Mucosa of descending colon (tissue), 3 donors: ENCODE measurements at regions of chr7 and their contacts with region 1.

Region 1: DNA sequence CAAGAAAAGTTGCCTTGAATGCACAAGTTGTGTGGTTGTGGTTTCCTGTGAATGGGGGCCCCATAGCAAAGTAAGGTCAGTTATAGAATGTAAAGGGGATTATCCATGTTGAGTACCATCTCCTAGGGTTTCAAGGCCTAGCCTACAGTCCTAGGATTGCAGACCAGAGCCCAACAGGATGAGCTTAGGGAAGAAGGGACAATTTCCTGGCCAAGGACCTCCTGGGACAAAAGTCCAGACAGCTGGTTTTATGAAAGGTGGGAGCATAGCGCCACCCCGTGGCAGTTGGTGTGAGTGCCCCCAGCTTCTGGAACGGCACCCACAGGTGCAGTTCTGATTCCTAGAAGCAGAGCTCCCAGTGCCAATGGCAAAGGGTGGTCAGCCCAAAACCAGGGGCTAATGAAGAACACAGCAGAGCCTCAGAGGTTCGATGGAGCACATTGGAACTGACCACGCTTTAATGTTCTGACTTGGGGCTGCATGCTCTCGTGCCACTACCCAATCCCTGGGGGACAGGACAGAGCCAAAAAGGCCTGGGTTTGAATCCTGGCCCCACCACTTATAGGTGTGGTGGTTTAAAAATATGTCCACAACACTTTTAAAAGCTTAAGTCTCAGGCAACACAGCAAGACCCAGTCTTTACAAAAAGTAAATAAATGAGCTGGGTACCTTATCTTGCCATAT is 25.8 kb upstream of the TMEM120A start:
- DNase-seq: peak; percentile 72 to 91 (median 86)
- ATAC-seq: peak; percentile 96
- H3K4me3 ChIP-seq: no peak overlapping the region
- H3K4me1 ChIP-seq: peaks cover 3% of the 10 kb centered on the region
- CTCF ChIP-seq: peak; percentile 82

Region 2: GRCh38 chr7:75866489-75867389 is 153.4 kb before region 1 on chr7:
- intact Hi-C with region 1: loop called (anchors 1 to 10 kb)
- DNase-seq: peak in 2 of 3 donors; percentile 52 to 72
- ATAC-seq: peak; percentile 93
- H3K4me3 ChIP-seq: no peak overlapping the region
- H3K4me1 ChIP-seq: no peaks in the 10 kb centered on the region
- CTCF ChIP-seq: peak; percentile 89

Region 3: DNA sequence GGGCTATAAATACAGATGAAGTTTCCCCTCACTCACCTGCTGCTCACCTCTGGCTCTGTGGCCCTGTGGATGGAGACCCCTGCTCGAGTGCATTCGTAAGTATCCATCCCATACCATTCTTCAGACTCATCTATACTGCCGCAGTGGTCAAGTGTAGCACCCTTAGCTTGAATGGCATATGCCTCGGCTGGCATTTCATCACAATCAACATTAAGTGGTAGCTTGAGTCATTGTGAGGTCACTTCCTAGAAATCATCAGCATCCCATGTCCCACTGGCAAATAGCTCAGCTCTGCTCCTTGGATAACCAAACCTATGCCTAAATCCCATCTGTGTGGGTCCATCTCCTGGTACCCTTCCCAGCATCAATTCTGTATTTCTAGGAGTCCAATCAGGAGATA is 65.9 kb after region 1 on chr7:
- intact Hi-C with region 1: no loop called
- DNase-seq: no peak
- ATAC-seq: no peak
- H3K4me3 ChIP-seq: no peak overlapping the region
- H3K4me1 ChIP-seq: no peaks in the 10 kb centered on the region
- CTCF ChIP-seq: no peak

Region 4: DNA sequence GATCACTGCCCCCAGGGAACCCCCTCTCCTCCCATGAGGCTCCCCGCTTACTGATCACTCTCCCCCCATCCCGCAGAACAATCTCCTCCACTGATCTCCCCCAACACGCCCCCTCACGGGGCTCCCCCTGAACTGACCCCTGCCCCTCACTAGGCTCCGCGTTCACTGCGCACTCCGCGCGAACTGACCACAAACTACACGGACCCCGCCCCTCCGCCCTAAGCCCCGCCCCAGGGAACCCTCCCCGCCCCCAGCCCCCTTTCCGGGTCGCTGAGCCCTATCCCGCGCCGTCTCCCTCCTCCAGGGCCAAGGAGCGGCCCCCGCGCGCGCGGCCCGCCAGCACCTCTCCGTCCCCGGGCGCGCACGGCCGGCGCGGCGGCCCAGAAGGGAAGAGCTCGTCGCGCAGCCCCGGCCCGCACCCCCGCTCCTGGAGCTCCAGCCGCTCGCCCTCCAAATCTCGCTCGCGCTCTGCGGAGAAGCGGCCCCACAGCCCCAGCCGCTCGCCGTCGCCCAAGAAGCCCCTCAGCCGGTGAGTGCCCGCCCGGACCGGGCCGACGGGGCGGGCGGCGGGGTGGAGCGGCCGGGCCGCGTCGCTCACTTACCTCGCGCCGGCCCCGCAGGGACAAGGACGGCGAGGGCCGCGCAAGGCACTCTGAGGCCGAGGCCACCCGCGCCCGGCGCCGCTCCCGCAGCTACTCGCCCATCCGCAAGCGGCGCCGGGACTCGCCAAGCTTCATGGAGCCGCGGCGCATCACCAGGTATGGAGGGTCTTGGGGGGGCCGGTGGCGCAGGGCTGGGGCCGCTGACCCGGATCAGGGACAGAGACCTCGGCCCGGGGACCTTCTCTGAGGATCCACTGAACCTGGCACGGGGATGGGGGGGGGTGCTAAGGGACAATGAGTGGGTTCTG is 262.4 kb after region 1 on chr7:
- intact Hi-C with region 1: no loop called
- DNase-seq: no peak
- ATAC-seq: peak; percentile 40
- H3K4me3 ChIP-seq: no peak overlapping the region
- H3K4me1 ChIP-seq: peaks cover 9% of the 10 kb centered on the region
- CTCF ChIP-seq: no peak